Endothelial cell of umbilical vein (primary cell): ENCODE measurements at regions of chr3 and their contacts with region 1.

Region 1: DNA sequence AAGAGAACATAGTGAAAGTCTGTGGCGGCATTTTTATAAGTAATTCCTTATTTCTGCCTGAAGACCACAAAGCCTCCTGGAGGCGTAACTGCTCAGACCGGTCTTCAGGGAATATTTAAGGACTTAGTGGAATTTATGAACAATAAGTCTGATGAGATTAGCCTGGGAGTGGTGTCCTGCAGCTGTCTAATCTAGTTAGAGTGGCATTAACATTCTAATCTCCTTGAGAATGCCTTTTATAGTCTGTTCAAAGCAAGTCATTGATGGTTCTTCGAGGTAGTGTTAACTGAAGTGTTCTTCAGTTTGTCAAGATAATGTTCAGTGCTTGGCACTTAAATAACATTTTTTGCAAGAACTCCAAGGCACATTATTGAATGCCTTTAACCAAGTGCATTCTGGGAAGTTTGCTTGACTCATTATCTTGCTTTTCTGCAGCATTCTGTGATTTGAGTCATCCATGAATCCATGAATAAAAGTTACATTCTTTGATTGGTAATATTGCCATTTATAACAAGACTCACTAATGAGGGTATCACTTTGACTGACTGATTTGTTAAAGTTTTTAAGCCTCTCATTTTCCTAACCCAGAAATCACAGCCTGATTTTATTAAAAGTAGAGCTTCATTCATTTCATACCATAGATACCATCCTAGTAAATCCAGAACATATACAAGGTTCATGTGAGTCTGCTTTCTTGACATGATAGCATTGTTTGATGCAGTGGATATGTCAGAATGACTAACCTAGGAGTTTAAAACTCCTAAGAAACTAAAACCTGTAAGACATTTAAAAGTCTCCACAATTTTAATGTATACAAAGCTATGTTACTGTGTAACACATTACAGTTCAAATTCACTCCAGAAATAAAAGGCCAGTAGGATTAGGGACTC is 12.5 kb downstream of the RBM5 start:
- DNase-seq: no peak
- H3K4me3 ChIP-seq: no peak overlapping the region
- H3K27ac ChIP-seq: no peak overlapping the region
- H3K4me1 ChIP-seq: no peaks in the 10 kb centered on the region
- H3K27me3 ChIP-seq: no peaks in the 10 kb centered on the region
- CTCF ChIP-seq: no peak
- POLR2A ChIP-seq: no peak

Region 2: GRCh38 chr3:49295489-49296058 is 805.6 kb before region 1 on chr3:
- CTCF ChIA-PET with region 1: no interaction called
- POLR2A ChIA-PET with region 1: interaction called, 12 read pairs
- dilution Hi-C with region 1: no loop called
- intact Hi-C with region 1: no loop called
- DNase-seq: peak; percentile 55
- H3K4me3 ChIP-seq: no peak overlapping the region
- H3K27ac ChIP-seq: no peak overlapping the region
- H3K4me1 ChIP-seq: peaks cover 8% of the 10 kb centered on the region
- H3K27me3 ChIP-seq: no peaks in the 10 kb centered on the region
- CTCF ChIP-seq: peak; percentile 50 to 52
- POLR2A ChIP-seq: no peak